CD4-positive, alpha-beta T cell (primary cell): ENCODE measurements at regions of chr2 and their contacts with region 1.

Region 1: GRCh38 chr2:240143801-240144648 is 3.6 kb upstream of the OTOS start:
- DNase-seq: peak; percentile 65 to 89 (median 78)
- ATAC-seq: peak; percentile 98
- H3K4me3 ChIP-seq: no peak overlapping the region
- H3K4me3 Mint-ChIP-seq: no peak overlapping the region
- H3K27ac ChIP-seq: no peak overlapping the region
- H3K27ac Mint-ChIP-seq: no peak overlapping the region
- H3K4me1 ChIP-seq: peaks cover 8% of the 10 kb centered on the region
- H3K4me1 Mint-ChIP-seq: no peaks in the 10 kb centered on the region
- H3K27me3 ChIP-seq: peaks cover 6 to 11% of the 10 kb centered on the region in 2 experiments
- H3K27me3 Mint-ChIP-seq: peaks cover 4% of the 10 kb centered on the region
- CTCF ChIP-seq: peak; percentile 93

Region 2: DNA sequence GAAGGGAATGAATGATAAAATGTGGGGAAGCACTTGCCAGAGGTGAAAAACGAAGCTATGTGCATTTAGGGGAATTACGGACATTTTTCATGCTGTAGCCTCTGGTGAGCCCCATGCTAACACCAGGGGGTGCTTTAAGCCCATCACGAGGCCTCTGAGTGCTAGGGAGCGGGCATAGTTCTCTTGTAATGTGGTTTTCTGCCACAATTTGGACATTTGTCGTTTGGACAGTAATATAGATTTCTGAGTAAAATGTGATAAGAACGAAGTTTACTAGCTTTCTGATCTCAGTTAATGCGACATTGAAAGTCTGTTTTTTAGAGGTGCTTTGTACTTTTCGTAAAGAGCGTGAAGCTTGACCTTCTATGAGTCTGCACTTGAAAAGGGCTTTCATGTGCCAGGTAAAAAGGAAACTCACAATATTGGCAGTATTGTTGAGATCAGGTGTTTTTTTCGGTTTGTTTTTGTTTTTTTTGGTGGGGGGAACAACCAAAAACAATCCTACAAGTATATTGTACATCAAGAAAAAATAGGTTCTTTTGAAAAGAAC is 1773.1 kb before region 1 on chr2:
- CTCF ChIA-PET with region 1: no interaction called
- POLR2A ChIA-PET with region 1: no interaction called
- intact Hi-C with region 1: loop called in 1 of 2 experiments (anchors 10 kb)
- DNase-seq: peak in 12 of 14 experiments; percentile 18 to 75 (median 41)
- ATAC-seq: peak; percentile 68
- H3K4me3 ChIP-seq: no peak overlapping the region
- H3K4me3 Mint-ChIP-seq: no peak overlapping the region
- H3K27ac ChIP-seq: no peak overlapping the region
- H3K27ac Mint-ChIP-seq: no peak overlapping the region
- H3K4me1 ChIP-seq: no peaks in the 10 kb centered on the region
- H3K4me1 Mint-ChIP-seq: peaks cover 8% of the 10 kb centered on the region
- H3K27me3 ChIP-seq: no peaks in the 10 kb centered on the region
- H3K27me3 Mint-ChIP-seq: no peaks in the 10 kb centered on the region
- CTCF ChIP-seq: peak; percentile 70

Region 3: GRCh38 chr2:239035361-239036078 is 1108.5 kb before region 1 on chr2:
- CTCF ChIA-PET with region 1: interaction called, 4 read pairs
- POLR2A ChIA-PET with region 1: no interaction called
- intact Hi-C with region 1: loop called (anchors 2 to 5 kb)
- DNase-seq: peak; percentile 47 to 78 (median 62)
- ATAC-seq: peak; percentile 92
- H3K4me3 ChIP-seq: no peak overlapping the region
- H3K4me3 Mint-ChIP-seq: no peak overlapping the region
- H3K27ac ChIP-seq: no peak overlapping the region
- H3K27ac Mint-ChIP-seq: no peak overlapping the region
- H3K4me1 ChIP-seq: peaks cover 7% of the 10 kb centered on the region
- H3K4me1 Mint-ChIP-seq: no peaks in the 10 kb centered on the region
- H3K27me3 ChIP-seq: peaks cover 8 to 13% of the 10 kb centered on the region in 2 experiments
- H3K27me3 Mint-ChIP-seq: peaks cover 8% of the 10 kb centered on the region
- CTCF ChIP-seq: peak; percentile 88

Region 4: DNA sequence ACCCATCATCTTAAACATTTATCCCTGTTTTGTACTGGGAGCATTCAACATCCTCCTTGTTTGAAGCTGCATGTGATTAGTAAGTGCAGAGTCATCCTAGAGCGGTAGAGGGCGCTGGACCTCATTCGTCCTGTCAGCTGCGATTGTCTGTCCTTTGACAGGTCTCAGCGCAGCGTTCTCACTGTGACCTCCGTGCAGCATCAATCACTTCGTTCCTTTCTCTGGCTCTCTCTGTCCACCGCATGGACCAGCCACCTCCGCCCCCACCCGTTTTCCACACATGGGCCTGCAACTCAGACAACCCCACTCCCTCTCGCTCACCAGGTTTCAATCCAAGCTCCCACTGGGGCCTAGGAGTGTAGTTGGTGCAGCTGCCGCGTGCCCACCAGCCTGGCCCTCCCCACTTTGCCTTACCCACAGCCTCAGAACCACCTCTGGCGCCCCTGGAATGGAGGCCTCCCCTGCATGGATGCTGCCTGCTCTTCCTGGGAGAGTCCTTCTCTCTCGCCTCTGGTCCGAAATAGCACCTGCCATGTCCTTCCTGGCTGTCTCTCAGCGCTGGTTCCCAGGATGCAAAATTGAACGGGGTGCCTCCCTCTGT is 209.4 kb before region 1 on chr2:
- CTCF ChIA-PET with region 1: no interaction called
- POLR2A ChIA-PET with region 1: no interaction called
- intact Hi-C with region 1: loop called (anchors 5 to 10 kb)
- DNase-seq: peak; percentile 31 to 80 (median 54)
- ATAC-seq: peak; percentile 84
- H3K4me3 ChIP-seq: no peak overlapping the region
- H3K4me3 Mint-ChIP-seq: no peak overlapping the region
- H3K27ac ChIP-seq: no peak overlapping the region
- H3K27ac Mint-ChIP-seq: no peak overlapping the region
- H3K4me1 ChIP-seq: peaks cover 4% of the 10 kb centered on the region
- H3K4me1 Mint-ChIP-seq: peaks cover 6% of the 10 kb centered on the region
- H3K27me3 ChIP-seq: no peaks in the 10 kb centered on the region
- H3K27me3 Mint-ChIP-seq: no peaks in the 10 kb centered on the region
- CTCF ChIP-seq: peak; percentile 70

Region 5: GRCh38 chr2:240060977-240061591 is 82.9 kb before region 1 on chr2:
- CTCF ChIA-PET with region 1: interaction called, 56 read pairs
- POLR2A ChIA-PET with region 1: interaction called, 7 read pairs
- intact Hi-C with region 1: loop called (anchors 1 kb)
- DNase-seq: peak in 12 of 14 experiments; percentile 22 to 74 (median 34)
- ATAC-seq: peak; percentile 85
- H3K4me3 ChIP-seq: no peak overlapping the region
- H3K4me3 Mint-ChIP-seq: no peak overlapping the region
- H3K27ac ChIP-seq: no peak overlapping the region
- H3K27ac Mint-ChIP-seq: no peak overlapping the region
- H3K4me1 ChIP-seq: no peaks in the 10 kb centered on the region
- H3K4me1 Mint-ChIP-seq: no peaks in the 10 kb centered on the region
- H3K27me3 ChIP-seq: peaks cover 10 to 16% of the 10 kb centered on the region in 2 experiments
- H3K27me3 Mint-ChIP-seq: peaks cover 33% of the 10 kb centered on the region
- CTCF ChIP-seq: peak; percentile 65

Region 6: GRCh38 chr2:240095556-240096523 is 48.2 kb before region 1 on chr2:
- CTCF ChIA-PET with region 1: no interaction called
- POLR2A ChIA-PET with region 1: no interaction called
- intact Hi-C with region 1: no loop called
- DNase-seq: no peak
- ATAC-seq: no peak
- H3K4me3 ChIP-seq: no peak overlapping the region
- H3K4me3 Mint-ChIP-seq: no peak overlapping the region
- H3K27ac ChIP-seq: no peak overlapping the region
- H3K27ac Mint-ChIP-seq: no peak overlapping the region
- H3K4me1 ChIP-seq: no peaks in the 10 kb centered on the region
- H3K4me1 Mint-ChIP-seq: no peaks in the 10 kb centered on the region
- H3K27me3 ChIP-seq: peaks cover 28 to 56% of the 10 kb centered on the region in 2 experiments
- H3K27me3 Mint-ChIP-seq: peaks cover 85% of the 10 kb centered on the region
- CTCF ChIP-seq: no peak